ENCODE measurements at regions of chr6 and their contacts with region 1.

Region 1: DNA sequence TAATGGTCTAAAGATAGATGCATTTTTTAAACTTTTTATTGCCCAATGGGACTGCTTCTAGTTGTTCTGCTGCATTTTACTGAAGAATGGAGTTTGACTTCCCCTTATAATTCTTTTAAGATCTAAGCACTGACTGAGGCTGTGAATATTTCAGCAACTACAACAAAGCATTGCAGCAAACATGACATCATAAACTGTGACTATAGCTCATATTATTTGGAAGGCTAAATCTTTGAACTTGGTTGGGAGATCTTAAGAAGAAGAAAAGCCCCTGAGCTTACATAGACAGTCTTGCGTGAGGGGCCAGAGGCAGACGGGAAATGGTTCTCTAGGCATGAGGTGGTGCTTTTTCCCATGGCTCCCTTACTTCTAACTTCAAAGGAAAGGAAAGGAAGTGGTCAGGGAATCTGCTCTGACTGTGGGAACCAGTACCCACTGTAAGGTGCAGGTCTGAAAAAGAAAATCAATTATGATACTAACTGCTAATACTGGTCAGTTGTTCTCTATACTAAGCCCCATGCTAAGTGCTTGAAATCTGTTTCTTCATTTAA is 14.8 kb downstream of the HEY2 start:
- DNase-seq: no peak
- H3K4me3 ChIP-seq: no peak overlapping the region
- H3K27ac ChIP-seq: peak overlapping the region in 15 of 59 donors; percentile 6 to 45 (median 24)
- H3K27me3 ChIP-seq: peaks cover 0 to 6% (median 0%) of the 10 kb centered on the region in 45 donors
- CTCF ChIP-seq: no peak

Region 2: GRCh38 chr6:125153391-125154117 is 610.6 kb before region 1 on chr6 and contains the start of gene TPD52L1:
- intact Hi-C with region 1: loop called in 1 of 2 experiments (anchors 10 kb)
- DNase-seq: peak; percentile 50 to 83 (median 70)
- H3K4me3 ChIP-seq: peak within 1 kb of the TSS; percentile 53 to 88 (median 73)
- H3K27ac ChIP-seq: peak within 1 kb of the TSS in 56 of 59 donors; percentile 13 to 91 (median 78)
- H3K27me3 ChIP-seq: peaks cover 0 to under 1% (median 0%) of the 10 kb centered on the region in 45 donors
- CTCF ChIP-seq: peak; percentile 60 to 93 (median 81)
- total RNA-seq, gene TPD52L1: 42.2 to 338 (median 95.8) TPM

Region 3: DNA sequence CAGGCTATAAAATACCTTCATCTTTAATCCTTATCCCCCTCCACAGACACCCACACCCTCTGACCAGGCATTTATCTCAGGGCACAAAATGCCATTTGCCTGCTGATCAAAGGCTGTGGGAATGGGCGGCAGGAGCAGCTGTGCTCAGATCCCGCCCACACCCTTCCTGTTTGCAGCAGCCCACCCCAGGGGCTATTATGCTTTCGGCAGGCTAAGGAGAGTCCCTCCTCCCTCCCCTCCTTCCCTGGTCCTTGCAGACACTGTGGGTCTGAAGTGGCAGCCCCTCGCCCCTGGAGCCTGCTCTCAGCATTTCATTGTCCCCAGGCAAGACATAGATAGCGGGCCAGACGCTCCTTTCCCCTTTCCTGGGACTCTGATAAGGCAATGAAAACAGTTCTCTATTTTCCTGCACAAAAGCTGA is 235.6 kb before region 1 on chr6:
- intact Hi-C with region 1: loop called in 1 of 2 experiments (anchors 10 kb)
- DNase-seq: no peak
- H3K4me3 ChIP-seq: no peak overlapping the region
- H3K27ac ChIP-seq: no peak overlapping the region
- H3K27me3 ChIP-seq: peaks cover 0 to 11% (median 0%) of the 10 kb centered on the region in 45 donors
- CTCF ChIP-seq: no peak